ENCODE measurements at regions of chr11 and their contacts with region 1.

Region 1: DNA sequence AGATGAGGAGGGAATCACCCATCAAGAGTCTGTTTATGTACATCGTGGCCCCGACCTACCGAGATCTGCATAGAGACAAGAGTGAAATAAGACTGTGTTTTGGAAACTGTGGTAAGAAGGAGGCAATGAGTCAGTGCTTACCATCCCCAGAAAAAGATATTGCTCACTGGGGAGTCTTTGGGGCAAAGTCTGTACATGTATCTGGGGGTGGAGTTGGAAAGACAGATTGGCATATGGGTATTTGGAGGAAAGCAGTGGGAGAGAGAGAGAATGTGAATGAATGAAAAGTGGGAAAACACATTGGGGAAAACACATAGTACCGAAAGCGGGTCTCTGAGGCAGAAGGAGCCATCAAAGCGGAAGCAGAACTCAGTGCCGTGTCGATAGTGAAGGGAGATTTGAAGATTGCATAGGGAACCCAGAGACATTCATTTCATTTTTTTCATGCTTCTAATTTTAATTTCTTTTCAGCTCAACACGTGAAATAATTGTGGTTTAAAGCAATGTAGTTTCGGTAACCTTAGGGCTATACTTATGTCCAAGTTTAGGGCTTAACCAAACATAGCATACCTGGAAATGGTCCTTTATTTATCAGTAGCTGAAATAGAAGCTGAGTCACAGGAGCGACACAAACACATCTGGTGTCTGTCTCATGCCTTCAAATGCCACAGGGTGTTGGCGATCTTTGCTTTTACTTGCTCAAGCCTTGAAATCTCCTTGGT is 98.6 kb upstream of the CD44 start:
- DNase-seq: peak; percentile 91
- H3K4me3 Mint-ChIP-seq: peak overlapping the region; percentile 77
- H3K27ac Mint-ChIP-seq: peak overlapping the region; percentile 94
- H3K4me1 Mint-ChIP-seq: peaks cover 52% of the 10 kb centered on the region
- H3K27me3 Mint-ChIP-seq: peaks cover 9% of the 10 kb centered on the region

Region 2: GRCh38 chr11:35006389-35007128 is 33.8 kb before region 1 on chr11:
- intact Hi-C with region 1: loop called (anchors 1 kb)
- DNase-seq: peak; percentile 69
- H3K4me3 Mint-ChIP-seq: peak overlapping the region; percentile 25
- H3K27ac Mint-ChIP-seq: peak overlapping the region; percentile 51
- H3K4me1 Mint-ChIP-seq: peaks cover 42% of the 10 kb centered on the region
- H3K27me3 Mint-ChIP-seq: peaks cover 14% of the 10 kb centered on the region

Region 3: DNA sequence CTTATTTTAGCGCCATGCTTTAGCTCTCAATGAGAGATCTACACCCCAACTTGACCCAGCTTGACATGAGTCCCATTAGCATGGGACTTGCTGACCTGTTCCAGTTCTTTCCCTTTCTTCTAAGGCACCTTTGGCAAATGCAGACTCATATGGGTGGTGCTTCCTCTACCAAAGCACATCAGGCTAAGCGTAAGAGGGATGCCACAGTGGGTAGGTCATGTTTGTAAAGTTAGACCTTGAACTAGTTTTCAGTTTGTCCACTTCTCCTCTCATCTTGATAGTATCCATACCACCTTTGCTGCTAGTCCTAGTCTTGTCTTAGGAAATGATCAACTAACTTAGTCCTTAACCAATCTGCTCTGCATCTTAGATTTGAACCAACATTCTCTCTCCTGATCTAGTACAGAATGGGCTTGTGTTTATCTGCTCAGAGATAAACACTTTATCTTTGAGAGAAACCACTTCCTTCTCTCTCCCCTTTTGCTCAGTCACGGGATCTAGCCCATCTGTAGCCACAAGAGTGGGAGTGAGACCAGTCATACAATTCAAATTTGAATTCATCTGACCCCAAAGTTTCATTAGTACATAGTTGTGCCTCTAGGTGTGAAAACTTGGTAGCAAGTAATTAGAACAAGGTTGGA is 26.5 kb after region 1 on chr11:
- intact Hi-C with region 1: loop called (anchors 2 kb)
- DNase-seq: peak; percentile 79
- H3K4me3 Mint-ChIP-seq: peak overlapping the region; percentile 40
- H3K27ac Mint-ChIP-seq: peak overlapping the region; percentile 70
- H3K4me1 Mint-ChIP-seq: peaks cover 19% of the 10 kb centered on the region
- H3K27me3 Mint-ChIP-seq: no peaks in the 10 kb centered on the region

Region 4: DNA sequence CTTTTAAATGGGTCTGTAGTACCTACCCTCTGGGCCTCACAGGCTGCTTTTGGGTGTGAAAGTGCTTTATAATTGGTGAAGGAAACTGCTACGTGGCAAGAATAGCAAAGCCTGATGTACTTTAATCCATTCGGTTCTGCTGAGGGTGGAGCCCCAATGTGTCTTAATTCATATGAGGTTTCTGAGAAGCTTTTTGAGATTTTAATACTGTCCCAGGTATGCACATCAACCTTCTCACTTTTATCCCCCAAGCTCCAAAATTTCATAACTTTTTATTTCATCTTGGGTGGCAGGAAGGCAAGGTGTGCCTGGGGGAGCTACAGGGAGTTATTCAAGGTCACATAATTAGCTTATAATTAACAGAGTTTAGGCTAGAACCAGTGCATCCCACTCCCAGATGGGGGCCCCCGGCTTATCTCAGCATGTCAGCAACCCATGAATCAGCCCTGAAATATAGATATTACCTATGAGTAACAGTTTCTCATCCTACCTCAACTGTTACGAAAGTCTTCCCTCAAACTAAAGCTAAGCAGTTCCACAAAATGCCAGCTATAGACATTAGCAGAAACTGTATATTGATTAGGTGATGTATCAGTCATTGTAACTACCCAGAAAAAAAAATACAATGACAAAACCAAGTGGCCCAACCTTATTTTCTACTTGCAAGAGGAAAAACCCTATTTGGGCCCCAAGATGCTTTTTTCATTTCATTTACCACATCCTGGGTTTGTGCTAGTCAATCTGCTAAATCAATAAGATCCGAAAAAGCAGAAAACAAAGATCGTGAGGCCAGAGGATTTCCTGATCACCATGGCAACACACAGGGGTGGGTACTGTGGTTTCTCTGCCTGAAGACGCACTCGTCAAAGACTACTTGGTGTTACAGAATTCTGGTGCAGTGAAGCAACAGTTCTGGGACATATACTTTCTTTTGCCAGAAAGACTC is 125.3 kb after region 1 on chr11:
- intact Hi-C with region 1: loop called (anchors 1 kb)
- DNase-seq: peak; percentile 98
- H3K4me3 Mint-ChIP-seq: peak overlapping the region; percentile 78
- H3K27ac Mint-ChIP-seq: peak overlapping the region; percentile 99
- H3K4me1 Mint-ChIP-seq: peaks cover 93% of the 10 kb centered on the region
- H3K27me3 Mint-ChIP-seq: no peaks in the 10 kb centered on the region

Measured in activated CD4-positive, alpha-beta T cell treated with anti-CD3 and anti-CD28 coated beads, Interleukin-2, amount 10 ng/mL, durations not matched to agents 24 days and 14 days (primary cell).